Right ventricle myocardium inferior (tissue), 1 donor: ENCODE measurements at regions of chr14 and their contacts with region 1.

Region 1: GRCh38 chr14:66495218-66496098 is 9.3 kb downstream of the CCDC196 start:
- DNase-seq: no peak
- ATAC-seq: peak; percentile 84

Region 2: GRCh38 chr14:66284346-66284745 is 211.1 kb before region 1 on chr14:
- intact Hi-C with region 1: no loop called
- DNase-seq: no peak
- ATAC-seq: no peak

Region 3: GRCh38 chr14:66539034-66539433 is 43.6 kb after region 1 on chr14:
- intact Hi-C with region 1: no loop called
- DNase-seq: no peak
- ATAC-seq: no peak

Region 4: DNA sequence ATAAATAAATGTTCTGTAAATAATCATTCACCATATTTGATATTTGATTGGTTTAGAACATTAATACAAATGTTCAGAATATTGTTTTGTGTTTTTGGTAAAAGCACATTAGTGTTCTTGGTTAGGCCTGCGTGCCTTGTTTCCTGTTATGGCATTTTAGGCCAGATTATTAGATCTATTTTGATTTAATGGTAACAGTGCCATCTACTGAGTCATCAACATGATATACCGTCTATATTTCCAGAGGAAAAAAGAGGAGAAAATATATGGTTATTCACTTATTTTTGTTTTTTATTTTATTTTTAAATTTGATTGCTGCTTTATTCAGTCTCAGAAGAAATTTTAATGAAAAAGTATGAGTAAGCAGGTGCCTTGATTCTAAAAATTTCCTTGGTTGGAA is 72.8 kb after region 1 on chr14:
- intact Hi-C with region 1: loop called (anchors 5 kb)
- DNase-seq: no peak
- ATAC-seq: no peak

Region 5: GRCh38 chr14:66746316-66747006 is 251.0 kb after region 1 on chr14:
- intact Hi-C with region 1: loop called (anchors 10 kb)
- DNase-seq: no peak
- ATAC-seq: no peak